OCI-LY7 (cell line): ENCODE measurements at regions of chr14 and their contacts with region 1.

Region 1: DNA sequence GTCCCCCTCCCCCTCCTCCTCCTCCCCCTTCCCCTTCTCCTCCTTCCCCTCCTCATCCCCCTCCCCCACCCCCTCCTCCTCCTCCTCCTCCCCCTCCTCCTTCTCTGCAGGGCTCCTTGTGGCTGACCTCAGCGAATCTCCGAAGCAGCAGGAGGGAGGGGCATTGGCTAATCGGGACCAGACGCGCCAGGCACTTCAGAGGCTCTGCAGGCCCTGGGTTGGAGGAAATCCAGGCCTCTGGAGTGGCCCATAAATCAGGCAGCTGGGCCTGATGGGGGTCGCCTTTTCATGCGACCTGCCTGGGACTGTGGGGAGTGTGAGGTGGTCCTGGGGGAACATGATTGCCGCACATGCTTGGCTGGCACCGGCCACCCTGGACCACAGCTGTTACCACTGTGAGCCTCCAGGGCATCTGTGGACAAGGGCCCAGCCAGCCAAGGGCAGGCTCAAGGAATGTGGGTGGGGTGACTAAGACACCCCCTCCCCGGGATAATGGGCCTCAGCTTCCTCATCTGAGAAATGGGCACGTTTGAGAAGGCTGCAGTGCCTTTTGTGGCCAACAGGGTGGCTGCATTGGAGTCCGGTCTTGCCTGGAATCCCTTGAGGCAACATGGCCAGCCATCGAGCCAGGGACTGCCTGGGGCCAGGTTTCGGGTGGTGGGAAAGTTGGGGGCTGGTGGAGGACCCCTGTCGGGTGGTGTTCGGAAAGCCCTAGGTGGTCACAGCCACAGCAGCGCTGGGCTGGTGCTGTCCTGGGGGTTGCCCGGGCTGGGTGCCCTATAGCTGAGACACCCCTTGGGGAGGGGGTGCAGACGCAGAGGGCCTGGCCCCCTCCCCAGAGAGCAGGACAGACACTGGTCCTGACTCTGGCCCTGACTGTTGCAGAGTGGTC is 12.0 kb downstream of the KIF26A start:
- DNase-seq: no peak
- H3K4me3 ChIP-seq: no peak overlapping the region
- H3K27ac ChIP-seq: no peak overlapping the region
- H3K4me1 ChIP-seq: no peaks in the 10 kb centered on the region
- CTCF ChIP-seq: no peak; the same call in 1 of the 2 replicates

Region 2: GRCh38 chr14:104137297-104138097 is 12.9 kb before region 1 on chr14:
- CTCF ChIA-PET with region 1: no interaction called
- POLR2A ChIA-PET with region 1: no interaction called
- intact Hi-C with region 1: no loop called
- DNase-seq: peak; percentile 43
- H3K4me3 ChIP-seq: no peak overlapping the region
- H3K27ac ChIP-seq: no peak overlapping the region
- H3K4me1 ChIP-seq: no peaks in the 10 kb centered on the region
- CTCF ChIP-seq: peak; percentile 84

Region 3: GRCh38 chr14:104192146-104192882 is 41.9 kb after region 1 on chr14:
- CTCF ChIA-PET with region 1: no interaction called
- POLR2A ChIA-PET with region 1: no interaction called
- intact Hi-C with region 1: loop called (anchors 2 kb)
- DNase-seq: no peak
- H3K4me3 ChIP-seq: no peak overlapping the region
- H3K27ac ChIP-seq: no peak overlapping the region
- H3K4me1 ChIP-seq: peaks cover 7% of the 10 kb centered on the region
- CTCF ChIP-seq: no peak